Posterior cingulate gyrus (tissue), 11 donors: ENCODE measurements at regions of chr16 and their contacts with region 1.

Region 1: DNA sequence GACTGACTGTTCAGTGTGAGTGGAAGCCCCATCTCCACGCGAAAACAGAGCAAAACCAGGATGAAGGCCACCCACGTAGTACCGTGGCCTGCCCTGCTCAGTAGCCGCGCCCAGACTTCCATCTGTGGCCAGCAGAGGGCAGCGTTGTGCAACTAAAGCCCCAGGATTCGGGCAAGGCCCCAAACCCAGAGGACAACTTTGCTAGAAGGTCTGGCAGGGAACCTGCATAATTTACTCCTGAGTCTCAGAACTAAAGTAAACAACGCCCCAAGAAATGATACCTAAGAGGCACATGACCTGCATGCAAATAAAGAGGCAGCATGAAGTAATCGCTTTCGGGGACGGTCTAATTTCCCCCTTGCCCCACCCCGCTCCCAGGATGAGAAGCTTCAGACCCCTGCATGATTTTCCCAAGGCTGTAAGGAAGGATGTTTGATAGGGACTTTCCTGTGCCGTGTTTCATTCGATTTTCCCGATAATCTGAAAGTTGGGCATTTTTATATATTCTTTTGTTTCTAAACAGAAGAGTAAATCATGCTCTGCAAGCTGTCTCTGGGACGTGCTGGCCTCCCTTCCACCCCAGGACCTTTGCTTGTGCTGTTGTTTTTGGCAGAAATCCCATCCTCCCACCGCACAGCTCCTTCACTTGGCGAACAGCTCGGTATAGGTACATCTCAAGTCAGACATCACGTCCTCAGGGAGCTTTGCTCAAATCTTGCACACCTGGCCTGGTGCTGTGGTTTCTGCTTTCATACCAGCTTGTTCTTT is 18.6 kb downstream of the HSBP1 start:
- DNase-seq: peak; percentile 68 to 97 (median 90)

Region 2: GRCh38 chr16:83727018-83727417 is 99.3 kb before region 1 on chr16:
- intact Hi-C with region 1: no loop called
- DNase-seq: no peak

Region 3: DNA sequence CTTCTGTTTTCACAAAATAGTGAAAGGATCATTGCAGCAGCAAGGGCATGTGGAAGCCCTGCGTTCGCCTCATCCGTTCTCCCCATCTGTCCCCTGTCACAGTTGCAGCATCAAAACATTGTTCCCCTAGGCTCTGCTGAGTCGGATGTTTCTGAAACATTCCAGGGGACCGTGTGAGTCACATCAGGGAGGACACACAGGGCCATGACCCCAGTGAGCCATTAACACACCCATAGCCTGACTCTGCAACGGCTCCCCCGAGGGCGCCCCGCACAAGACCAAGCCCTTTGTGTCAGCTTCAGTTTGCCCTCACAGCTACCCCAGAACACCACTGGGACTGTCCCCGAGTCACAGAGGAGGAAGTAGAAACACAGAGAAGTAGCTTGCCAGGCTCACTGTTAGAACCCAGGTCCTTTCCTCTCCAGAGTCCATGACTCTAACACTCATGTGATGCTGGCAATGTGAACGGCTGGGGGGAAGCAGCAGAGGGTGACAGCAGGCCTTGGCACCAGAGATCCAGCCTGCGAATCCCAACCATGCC is 81.8 kb before region 1 on chr16:
- intact Hi-C with region 1: no loop called
- DNase-seq: peak in 7 of 10 donors; percentile 10 to 83 (median 42)

Region 4: DNA sequence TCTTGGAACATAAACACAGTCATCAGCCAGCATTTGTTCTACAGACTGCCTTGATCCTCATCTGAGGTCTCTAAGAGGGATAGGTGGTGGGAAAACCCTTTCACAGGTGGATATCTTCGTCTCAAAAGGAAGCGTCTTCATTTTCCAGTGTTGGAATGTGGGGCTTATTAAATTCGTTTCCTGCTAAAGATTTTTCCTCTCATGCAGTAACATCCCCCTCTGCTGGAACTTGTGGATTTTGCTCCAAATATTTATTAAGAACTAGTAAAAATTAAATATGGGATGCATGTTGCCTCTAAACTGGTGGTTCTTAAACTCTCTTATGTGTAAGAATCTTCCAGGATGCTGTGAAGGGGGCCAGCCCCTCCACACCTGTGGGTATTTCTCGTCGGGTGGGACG is 52.5 kb after region 1 on chr16:
- intact Hi-C with region 1: loop called (anchors 1 kb)
- DNase-seq: no peak

Region 5: GRCh38 chr16:83898463-83899271 is 72.3 kb after region 1 on chr16 and contains the start of gene MLYCD:
- intact Hi-C with region 1: loop called (anchors 5 kb)
- DNase-seq: peak; percentile 74 to 97 (median 81)

Region 6: DNA sequence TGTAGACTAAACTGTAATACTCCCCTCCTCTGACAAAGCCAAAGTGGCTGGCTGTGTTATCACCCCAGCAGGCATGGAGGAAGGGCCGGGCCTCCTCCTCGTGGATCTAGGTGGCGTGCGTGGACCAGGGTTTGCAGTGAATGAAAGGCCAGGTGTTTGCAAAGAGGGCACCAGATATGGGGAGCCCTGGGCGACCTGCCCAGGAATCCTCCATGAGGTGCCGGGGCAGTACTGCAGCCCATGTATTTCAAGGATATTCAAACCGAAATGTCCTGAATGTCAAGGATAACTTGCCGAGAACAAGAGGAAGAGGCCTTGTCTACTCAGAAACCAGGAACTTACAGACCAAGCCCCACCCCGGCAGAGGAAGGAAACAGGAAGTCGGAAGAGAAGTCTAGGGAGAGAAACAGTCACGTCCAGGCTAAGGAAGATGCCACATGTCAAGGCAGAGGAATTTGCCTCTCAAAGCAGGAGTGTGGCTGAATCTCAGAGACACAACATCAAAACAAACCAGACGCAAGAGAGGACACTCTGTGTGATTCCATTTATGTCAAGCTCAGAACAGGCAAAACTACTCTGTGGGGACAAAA is 113.0 kb after region 1 on chr16:
- intact Hi-C with region 1: no loop called
- DNase-seq: no peak